ENCODE measurements at regions of chr10 and their contacts with region 1.

Region 1: GRCh38 chr10:113385021-113385999 is 167.5 kb upstream of the HABP2 start:
- DNase-seq: peak in 1 of 2 donors; percentile 96
- H3K4me3 ChIP-seq: no peak overlapping the region
- H3K27ac ChIP-seq: peak overlapping the region; percentile 70
- H3K4me1 ChIP-seq: peaks cover 44% of the 10 kb centered on the region
- H3K27me3 ChIP-seq: no peaks in the 10 kb centered on the region
- CTCF ChIP-seq: peak; percentile 69 to 83 (median 82)
- POLR2A ChIP-seq: no peak

Region 2: GRCh38 chr10:113126229-113127201 is 258.8 kb before region 1 on chr10:
- intact Hi-C with region 1: loop called (anchors 10 kb)
- DNase-seq: no peak
- H3K4me3 ChIP-seq: peak overlapping the region; percentile 32 to 58
- H3K27ac ChIP-seq: no peak overlapping the region
- H3K4me1 ChIP-seq: peaks cover 9% of the 10 kb centered on the region
- H3K27me3 ChIP-seq: no peaks in the 10 kb centered on the region
- CTCF ChIP-seq: peak; percentile 33 to 75 (median 49)
- POLR2A ChIP-seq: no peak

Region 3: DNA sequence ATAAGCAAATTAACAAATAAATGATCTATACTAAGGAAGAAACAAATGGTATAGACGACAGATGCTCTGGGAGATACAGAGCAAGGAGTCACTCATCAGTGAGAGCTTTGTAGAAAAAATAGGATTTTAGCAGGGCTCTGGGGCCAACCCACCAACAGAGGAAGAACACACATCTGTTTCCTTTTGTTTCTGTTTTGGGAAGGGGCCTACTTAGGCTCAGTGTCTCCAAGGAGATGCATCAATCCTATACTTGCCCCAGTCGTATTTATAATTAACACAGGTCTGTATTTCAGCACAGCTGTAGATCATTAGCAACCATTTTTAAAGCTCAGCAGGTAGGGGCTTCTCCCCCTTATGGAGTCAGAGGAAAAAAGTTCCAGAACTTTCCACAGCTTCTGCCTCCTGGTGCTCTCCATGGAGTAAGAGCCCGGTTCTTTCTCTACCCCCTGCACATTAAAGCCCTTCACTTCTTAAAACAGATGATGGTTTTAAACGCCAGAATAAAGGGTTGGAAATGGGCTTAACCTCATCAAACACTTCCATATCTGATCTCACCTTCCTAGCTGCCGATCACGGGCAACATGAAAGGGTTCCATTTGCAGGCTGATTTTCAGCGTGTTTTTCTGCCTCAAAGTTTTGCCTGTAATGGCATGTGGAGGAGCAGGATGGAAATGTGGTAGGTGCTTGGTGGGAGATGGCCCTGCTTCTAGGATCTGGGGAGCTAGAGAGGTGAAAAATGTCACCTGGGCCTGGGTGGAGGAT is 143.5 kb before region 1 on chr10:
- intact Hi-C with region 1: no loop called
- DNase-seq: no peak
- H3K4me3 ChIP-seq: no peak overlapping the region
- H3K27ac ChIP-seq: no peak overlapping the region
- H3K4me1 ChIP-seq: no peaks in the 10 kb centered on the region
- H3K27me3 ChIP-seq: no peaks in the 10 kb centered on the region
- CTCF ChIP-seq: no peak
- POLR2A ChIP-seq: no peak

Region 4: DNA sequence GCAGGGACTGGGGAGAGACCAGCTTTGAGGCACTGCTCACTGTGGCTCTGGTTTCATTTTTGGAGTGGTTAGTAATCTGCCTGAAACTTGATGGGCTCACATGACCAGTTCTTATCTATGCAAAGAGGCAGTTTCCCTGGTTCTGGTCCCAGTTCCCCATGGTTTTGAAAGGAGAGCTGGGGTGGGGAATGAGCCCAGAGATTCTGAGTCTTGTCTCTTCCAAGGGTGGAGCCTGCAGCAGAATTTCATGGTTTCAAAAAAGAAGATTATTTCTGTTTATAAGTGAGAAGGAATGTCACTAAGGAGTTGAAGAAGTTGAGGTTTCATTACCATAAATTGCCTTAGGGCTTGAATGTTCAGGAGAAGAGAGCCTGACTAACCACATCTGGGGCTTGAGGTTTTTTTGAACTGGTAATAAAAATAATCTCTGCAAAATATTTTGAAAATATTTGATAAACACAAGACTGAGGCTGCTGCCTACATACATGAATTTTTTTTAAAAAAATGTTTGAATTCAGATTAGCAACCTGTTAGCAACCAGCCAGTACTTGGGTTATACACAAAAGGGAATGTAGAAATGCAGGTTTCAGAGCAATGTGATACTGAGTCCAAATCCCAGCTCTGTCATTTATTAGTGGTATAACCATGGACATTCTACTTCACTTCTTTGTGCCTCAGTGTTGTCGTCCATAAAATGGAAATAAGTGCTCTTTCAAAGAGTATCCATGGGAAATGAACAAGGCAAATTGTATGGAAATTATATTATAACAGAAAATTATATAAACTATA is 22.5 kb before region 1 on chr10:
- intact Hi-C with region 1: loop called (anchors 1 kb)
- DNase-seq: no peak
- H3K4me3 ChIP-seq: no peak overlapping the region
- H3K27ac ChIP-seq: no peak overlapping the region
- H3K4me1 ChIP-seq: peaks cover 32% of the 10 kb centered on the region
- H3K27me3 ChIP-seq: no peaks in the 10 kb centered on the region
- CTCF ChIP-seq: no peak
- POLR2A ChIP-seq: no peak